GM12878 (cell line): ENCODE measurements at regions of chr3 and their contacts with region 1.

Region 1: DNA sequence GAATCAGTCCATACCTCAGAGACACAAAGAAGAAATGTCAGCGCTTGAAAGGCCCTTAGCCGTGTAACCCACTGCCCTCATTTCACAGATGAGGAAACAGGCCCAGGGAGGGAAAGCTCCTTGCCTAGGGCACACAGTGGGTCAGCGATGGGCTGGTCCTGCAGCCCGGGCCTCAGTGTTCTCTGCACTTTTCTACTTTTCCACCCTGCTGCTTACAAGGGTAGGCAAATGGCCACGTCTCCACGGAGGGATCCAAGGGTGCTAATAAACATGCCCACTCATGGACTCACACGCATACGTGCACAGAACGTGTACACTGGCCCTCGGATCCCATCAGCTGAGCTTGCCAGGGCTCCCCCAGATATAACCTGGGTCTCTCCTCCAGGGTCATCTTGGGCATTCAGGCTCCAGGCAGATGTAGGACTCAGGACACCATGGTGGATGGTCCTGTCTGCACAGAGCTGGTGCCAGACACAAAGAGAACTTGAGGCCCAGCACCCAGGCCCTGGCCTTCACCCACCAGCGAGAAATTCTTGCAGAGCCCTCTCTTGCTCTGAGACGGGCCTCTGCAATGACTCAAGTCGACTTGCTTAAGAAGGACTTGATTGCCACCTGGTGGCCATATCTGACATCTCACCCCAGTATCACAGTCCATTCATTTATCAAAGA is 34.5 kb upstream of the VPS8 start:
- DNase-seq: peak; percentile 30
- ATAC-seq: peak; percentile 98
- H3K4me3 ChIP-seq: no peak overlapping the region
- H3K27ac ChIP-seq: no peak overlapping the region
- H3K4me1 ChIP-seq: no peaks in the 10 kb centered on the region
- H3K27me3 ChIP-seq: no peaks in the 10 kb centered on the region; a peak in 1 of 4 replicates
- CTCF ChIP-seq: peak; percentile 73 to 86 (median 79)
- EP300 ChIP-seq: no peak
- POLR2A ChIP-seq: no peak
- RAD21 ChIP-seq: peak; percentile 96

Region 2: DNA sequence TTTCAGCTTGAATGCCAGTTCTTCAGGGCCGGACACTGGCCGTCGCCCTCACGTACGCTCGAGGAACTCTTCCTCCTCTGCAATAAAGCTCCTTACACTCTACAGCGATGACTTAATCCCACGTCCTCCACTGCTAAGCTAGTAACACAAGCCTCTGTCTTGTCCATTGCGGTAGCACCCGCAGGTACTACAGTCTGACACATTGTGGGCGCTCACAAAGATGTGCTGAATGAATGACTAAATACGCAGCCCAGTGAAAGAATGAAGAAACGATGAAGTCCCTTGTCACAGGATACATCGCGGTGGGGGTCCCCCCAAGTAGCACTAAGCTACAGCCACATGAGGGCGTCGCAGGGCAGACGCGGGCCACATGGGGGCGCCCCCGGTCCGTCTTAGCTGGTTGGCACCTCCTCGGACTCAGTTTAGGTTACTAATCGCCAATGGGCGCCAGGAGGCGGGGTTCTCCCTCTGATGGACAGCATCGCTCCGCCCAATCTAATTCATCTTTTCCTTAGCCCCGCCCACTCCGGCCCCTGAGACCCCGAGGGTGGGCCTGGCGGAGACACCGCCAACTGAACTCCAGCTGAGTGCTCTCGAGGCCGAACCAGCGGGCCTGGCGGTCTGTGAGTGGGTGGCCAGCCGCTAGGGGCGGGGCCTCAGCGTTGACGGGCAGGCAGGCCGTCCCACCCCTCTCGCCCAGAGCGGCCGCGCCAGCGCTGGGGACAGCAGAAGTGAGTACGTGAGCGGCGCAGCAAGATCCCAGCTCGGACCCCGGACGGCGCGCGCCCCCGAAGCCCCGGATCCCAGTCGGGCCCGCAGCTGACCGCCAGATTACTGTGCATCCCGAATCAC is 216.2 kb before region 1 on chr3 and contains the start of gene EPHB3:
- CTCF ChIA-PET with region 1: interaction called, 20 read pairs
- POLR2A ChIA-PET with region 1: interaction called, 3 read pairs
- RAD21 ChIA-PET with region 1: interaction called, 3 read pairs
- SMC1A ChIA-PET with region 1: interaction called, 3 read pairs
- in situ Hi-C with region 1: no loop called
- intact Hi-C with region 1: loop called (anchors 1 kb)
- DNase-seq: peak; percentile 34
- ATAC-seq: peak; percentile 96
- H3K4me3 ChIP-seq: no peak within 1 kb of the TSS
- H3K27ac ChIP-seq: no peak within 1 kb of the TSS
- H3K4me1 ChIP-seq: peaks cover 8% of the 10 kb centered on the region; the same call in 1 of the 2 replicates
- H3K27me3 ChIP-seq: peaks cover 8 to 18% of the 10 kb centered on the region in 2 experiments
- CTCF ChIP-seq: peak; percentile 84 to 99 (median 86); a peak in 5 of 6 replicates
- EP300 ChIP-seq: no peak
- POLR2A ChIP-seq: no peak
- RAD21 ChIP-seq: peak; percentile 86
- polyA plus RNA-seq, gene EPHB3: not detected

Region 3: DNA sequence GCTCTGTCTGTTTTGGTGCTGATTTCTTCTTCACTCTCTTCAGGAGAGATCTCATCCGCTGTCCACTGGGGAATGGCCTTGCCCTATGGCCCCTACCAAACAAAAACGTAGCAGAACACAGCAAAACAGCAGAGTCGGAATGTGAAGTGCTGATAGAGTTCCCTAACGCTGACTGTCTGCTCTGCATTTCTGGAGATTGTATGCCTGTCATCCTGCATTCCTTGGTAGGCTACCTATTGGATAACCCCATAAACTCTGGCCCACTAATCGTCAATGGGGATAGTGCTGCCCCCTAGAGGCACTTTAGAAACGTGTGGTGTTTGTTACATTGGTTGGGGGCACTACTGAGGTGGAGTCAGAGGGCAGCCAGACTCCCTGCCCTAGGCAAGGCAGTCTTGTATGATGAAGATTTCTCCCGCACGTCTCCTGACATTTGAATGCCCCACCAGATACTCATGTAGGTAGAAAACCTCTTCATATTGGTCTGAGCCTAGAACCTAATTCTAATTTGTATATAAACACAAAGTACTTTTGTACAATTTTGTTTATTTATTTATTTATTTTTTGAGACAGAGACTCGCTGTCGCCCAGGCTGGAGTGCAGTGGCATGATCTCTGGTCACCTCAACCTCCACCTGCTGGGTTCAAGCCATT is 50.0 kb before region 1 on chr3:
- CTCF ChIA-PET with region 1: interaction called, 6 read pairs
- POLR2A ChIA-PET with region 1: no interaction called
- RAD21 ChIA-PET with region 1: interaction called, 5 read pairs
- SMC1A ChIA-PET with region 1: no interaction called
- in situ Hi-C with region 1: no loop called
- intact Hi-C with region 1: loop called (anchors 2 kb)
- DNase-seq: no peak
- ATAC-seq: peak; percentile 93
- H3K4me3 ChIP-seq: no peak overlapping the region
- H3K27ac ChIP-seq: no peak overlapping the region
- H3K4me1 ChIP-seq: no peaks in the 10 kb centered on the region
- H3K27me3 ChIP-seq: no peaks in the 10 kb centered on the region; a peak in 2 of 4 replicates
- CTCF ChIP-seq: peak; percentile 54 to 73 (median 56)
- EP300 ChIP-seq: no peak
- POLR2A ChIP-seq: no peak
- RAD21 ChIP-seq: peak; percentile 59